Activated B cell treated with CpG ODN at 0.5 μM for 24 hours (primary cell): ENCODE measurements at regions of chr7 and their contacts with region 1.

Region 1: GRCh38 chr7:25125137-25125946 is at the start of gene CYCS:
- DNase-seq: peak; percentile 98
- ATAC-seq: peak; percentile 91
- H3K4me3 Mint-ChIP-seq: peak within 1 kb of the TSS; percentile 99
- H3K27ac Mint-ChIP-seq: peak within 1 kb of the TSS; percentile 99
- H3K4me1 Mint-ChIP-seq: peaks cover 31% of the 10 kb centered on the region
- H3K27me3 Mint-ChIP-seq: peaks cover 1% of the 10 kb centered on the region
- CTCF ChIP-seq: no peak
- total RNA-seq, gene CYCS: 73.0 and 85.0 TPM in 2 replicates

Region 2: DNA sequence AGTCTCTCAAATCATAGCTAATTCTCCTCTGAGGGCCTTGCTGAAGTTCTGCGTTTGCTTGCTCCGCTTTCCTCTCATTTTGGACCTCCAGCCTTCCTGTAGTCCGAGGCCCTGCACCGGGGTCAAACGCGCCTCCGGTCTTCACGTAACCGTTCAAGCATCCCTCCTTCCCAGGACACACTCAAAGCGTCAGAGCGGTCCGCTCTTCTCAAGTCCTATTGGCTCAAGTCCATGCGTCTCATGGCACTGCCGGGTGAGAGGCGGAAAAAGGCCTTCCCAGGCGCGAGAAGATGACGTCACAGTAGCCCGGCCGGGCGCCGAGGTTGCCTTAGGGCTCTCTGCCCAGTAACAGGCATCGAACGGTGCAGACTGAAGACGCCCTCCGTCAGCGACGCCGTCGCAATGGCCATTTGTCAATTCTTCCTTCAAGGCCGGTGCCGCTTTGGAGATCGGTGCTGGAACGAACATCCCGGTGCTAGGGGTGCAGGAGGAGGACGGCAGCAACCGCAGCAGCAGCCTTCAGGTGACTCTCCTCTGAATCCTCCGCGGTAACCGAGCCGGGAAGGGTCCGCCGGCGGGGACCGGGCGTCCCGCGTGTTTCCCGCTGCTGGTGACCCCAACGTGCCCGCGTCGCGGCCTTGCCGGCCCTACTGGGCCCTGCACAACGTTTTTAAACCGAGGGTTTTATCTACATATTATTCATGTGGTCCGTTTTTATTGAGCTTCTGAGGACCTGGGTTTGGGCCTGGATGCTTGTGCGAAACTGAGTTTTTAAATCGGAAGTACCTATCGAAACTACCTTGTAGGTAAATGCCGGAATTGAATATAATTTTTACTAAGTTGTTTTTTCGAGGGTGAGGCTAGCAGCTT is 1943.4 kb before region 1 on chr7 and contains the start of gene NUP42:
- CTCF ChIA-PET with region 1: no interaction called
- POLR2A ChIA-PET with region 1: no interaction called
- intact Hi-C with region 1: loop called (anchors 5 kb)
- DNase-seq: peak; percentile 90
- ATAC-seq: peak; percentile 90
- H3K4me3 Mint-ChIP-seq: peak within 1 kb of the TSS; percentile 94
- H3K27ac Mint-ChIP-seq: peak within 1 kb of the TSS; percentile 100
- H3K4me1 Mint-ChIP-seq: peaks cover 28% of the 10 kb centered on the region
- H3K27me3 Mint-ChIP-seq: no peaks in the 10 kb centered on the region
- CTCF ChIP-seq: no peak
- total RNA-seq, gene NUP42: 39.2 and 50.6 TPM in 2 replicates

Region 3: DNA sequence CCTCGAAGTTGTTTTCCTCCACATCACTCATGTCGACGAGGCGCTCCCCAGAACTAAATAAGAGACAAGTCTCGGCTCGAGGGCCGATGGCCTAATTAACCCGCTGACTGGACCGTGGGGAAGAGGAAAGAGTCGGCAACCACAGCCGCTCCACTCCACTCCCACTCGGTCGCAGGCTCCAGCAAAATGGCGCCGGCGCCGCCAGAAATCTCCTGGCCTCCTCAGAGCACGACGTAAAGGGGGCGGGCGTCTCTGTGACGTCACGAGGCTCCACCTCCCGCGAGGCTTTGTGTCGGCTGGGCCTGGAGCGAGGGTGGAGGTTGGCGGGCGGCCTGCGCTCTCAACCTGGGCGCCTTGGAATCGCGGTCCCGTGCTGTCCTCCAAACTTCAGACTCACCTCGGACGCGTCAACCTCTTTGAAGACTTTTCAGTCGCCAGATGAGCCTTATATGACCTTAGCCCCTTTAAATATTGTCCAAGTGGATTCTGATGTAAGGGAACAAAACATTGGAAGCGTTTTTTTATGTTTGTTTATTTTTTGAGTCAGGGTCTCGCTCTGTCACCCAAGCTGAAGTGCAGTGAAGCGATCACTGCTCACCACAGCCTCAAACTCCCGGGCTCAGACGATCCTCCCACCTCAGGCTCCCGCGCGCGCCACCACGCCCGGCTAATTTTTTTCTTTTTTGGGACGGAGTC is 1593.4 kb before region 1 on chr7 and contains the start of gene TRA2A:
- CTCF ChIA-PET with region 1: no interaction called
- POLR2A ChIA-PET with region 1: interaction called, 3 read pairs
- intact Hi-C with region 1: loop called (anchors 2 kb)
- DNase-seq: peak; percentile 97
- ATAC-seq: peak; percentile 89
- H3K4me3 Mint-ChIP-seq: peak within 1 kb of the TSS; percentile 99
- H3K27ac Mint-ChIP-seq: peak within 1 kb of the TSS; percentile 100
- H3K4me1 Mint-ChIP-seq: peaks cover 49% of the 10 kb centered on the region
- H3K27me3 Mint-ChIP-seq: no peaks in the 10 kb centered on the region
- CTCF ChIP-seq: no peak
- total RNA-seq, gene TRA2A: 123 and 144 TPM in 2 replicates

Region 4: DNA sequence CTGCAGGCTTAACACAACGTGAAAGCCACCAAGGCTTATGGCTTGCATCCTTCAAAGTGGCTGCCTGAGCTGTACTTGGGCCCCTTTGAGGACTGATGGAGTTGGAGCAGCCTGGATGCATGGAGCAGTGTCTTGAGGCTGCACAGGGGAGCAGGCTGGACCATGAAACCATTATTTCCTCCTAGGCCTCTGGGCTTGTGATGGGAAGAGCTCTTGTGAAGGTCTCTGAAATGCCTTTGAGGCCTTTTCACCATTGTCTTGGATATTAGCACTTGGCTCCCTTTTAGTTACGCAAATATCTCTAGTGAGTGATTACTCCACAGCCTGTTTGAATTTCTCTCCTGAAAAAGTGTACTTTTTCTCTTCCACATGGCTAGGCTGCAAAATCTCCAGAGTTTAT is 1042.5 kb before region 1 on chr7:
- CTCF ChIA-PET with region 1: no interaction called
- POLR2A ChIA-PET with region 1: no interaction called
- intact Hi-C with region 1: no loop called
- DNase-seq: no peak
- ATAC-seq: no peak
- H3K4me3 Mint-ChIP-seq: no peak overlapping the region
- H3K27ac Mint-ChIP-seq: no peak overlapping the region
- H3K4me1 Mint-ChIP-seq: no peaks in the 10 kb centered on the region
- H3K27me3 Mint-ChIP-seq: no peaks in the 10 kb centered on the region
- CTCF ChIP-seq: no peak

Region 5: DNA sequence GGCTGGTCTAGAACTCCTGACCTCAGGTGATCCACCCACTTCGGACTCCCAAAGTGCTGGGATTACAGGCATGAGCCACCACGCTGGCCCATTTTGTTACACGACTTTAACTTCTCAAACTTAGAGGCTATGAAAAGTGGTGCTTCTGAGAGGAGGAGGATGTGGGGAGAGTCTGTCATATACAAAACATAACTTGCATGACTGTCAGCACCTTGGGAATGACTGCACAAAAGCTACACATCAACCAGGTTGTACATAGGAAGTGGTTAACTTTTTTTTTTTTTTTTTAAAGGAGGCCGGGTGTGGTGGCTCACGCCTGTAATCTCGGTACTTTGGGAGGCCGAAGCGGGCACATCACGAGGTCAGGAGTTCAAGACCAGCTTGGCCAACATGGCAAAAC is 324.7 kb before region 1 on chr7:
- CTCF ChIA-PET with region 1: no interaction called
- POLR2A ChIA-PET with region 1: interaction called, 11 read pairs
- intact Hi-C with region 1: no loop called
- DNase-seq: no peak
- ATAC-seq: no peak
- H3K4me3 Mint-ChIP-seq: no peak overlapping the region
- H3K27ac Mint-ChIP-seq: no peak overlapping the region
- H3K4me1 Mint-ChIP-seq: no peaks in the 10 kb centered on the region
- H3K27me3 Mint-ChIP-seq: no peaks in the 10 kb centered on the region
- CTCF ChIP-seq: no peak

Region 6: DNA sequence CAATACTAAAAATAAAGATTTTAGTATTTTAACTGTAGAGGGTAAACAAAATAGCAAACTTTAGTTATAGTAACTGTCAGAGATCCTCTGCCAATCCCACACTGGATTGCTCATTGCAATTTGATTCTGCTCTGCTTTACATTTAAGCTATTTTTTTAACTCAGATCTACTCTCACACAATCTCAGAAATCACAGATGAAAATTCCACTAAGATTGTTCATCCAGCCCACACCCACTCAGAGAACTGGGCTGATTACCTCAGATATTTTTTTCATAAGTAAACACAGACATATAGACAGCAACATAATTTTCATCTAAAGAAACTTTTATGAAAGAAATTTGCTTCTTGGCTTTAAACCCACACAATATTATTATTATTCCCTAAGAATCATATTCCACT is 152.4 kb before region 1 on chr7:
- CTCF ChIA-PET with region 1: no interaction called
- POLR2A ChIA-PET with region 1: no interaction called
- intact Hi-C with region 1: no loop called
- DNase-seq: no peak
- ATAC-seq: no peak
- H3K4me3 Mint-ChIP-seq: no peak overlapping the region
- H3K27ac Mint-ChIP-seq: no peak overlapping the region
- H3K4me1 Mint-ChIP-seq: peaks cover 28% of the 10 kb centered on the region
- H3K27me3 Mint-ChIP-seq: no peaks in the 10 kb centered on the region
- CTCF ChIP-seq: no peak

Region 7: DNA sequence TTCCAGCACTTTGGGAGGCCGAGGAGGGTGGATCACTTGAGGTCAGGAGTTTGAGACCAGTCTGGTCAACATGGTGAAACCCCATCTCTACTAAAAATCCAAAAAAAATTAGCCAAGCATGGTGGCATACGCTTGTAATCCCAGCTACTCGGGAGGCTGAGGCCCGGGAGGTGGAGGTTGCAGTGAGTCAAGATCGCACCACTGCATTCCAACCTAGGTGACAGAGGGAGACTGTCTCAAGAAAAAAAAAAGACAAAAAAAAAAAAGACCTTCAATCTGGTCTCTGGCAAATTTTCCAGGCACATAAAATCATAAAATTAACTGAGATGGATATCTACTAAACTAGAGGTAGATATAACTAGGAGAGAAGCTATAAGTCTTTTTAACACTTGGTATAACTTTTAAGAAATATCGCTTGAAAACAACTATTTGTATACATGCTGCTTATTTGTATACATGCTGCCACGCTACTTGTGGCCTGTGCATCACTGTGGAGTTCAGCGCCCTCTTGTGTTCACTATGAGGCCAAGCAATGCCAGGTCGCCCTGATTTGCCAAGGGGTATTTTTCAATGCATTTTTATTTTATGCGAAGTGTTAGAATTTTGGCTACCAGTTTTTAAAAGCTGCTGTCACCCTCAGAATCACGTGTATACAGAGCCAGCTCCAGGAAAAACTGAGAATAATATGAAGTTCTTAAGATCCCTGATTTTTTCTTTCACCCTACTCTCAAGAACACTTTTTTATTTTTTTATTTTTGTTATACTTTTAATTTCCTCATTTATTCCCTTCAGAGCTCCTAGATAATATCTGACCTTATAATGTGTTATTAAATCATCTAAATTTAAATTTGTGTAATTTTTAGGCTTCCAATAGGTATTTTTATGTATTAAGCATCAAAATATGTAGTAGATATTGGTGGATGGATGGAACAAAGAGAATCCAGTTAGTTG is 27.0 kb before region 1 on chr7:
- CTCF ChIA-PET with region 1: interaction called, 4 read pairs
- POLR2A ChIA-PET with region 1: interaction called, 5 read pairs
- intact Hi-C with region 1: loop called (anchors 1 kb)
- DNase-seq: no peak
- ATAC-seq: peak; percentile 87
- H3K4me3 Mint-ChIP-seq: no peak overlapping the region
- H3K27ac Mint-ChIP-seq: no peak overlapping the region
- H3K4me1 Mint-ChIP-seq: peaks cover 5% of the 10 kb centered on the region
- H3K27me3 Mint-ChIP-seq: peaks cover 3% of the 10 kb centered on the region
- CTCF ChIP-seq: peak; percentile 31

Region 8: DNA sequence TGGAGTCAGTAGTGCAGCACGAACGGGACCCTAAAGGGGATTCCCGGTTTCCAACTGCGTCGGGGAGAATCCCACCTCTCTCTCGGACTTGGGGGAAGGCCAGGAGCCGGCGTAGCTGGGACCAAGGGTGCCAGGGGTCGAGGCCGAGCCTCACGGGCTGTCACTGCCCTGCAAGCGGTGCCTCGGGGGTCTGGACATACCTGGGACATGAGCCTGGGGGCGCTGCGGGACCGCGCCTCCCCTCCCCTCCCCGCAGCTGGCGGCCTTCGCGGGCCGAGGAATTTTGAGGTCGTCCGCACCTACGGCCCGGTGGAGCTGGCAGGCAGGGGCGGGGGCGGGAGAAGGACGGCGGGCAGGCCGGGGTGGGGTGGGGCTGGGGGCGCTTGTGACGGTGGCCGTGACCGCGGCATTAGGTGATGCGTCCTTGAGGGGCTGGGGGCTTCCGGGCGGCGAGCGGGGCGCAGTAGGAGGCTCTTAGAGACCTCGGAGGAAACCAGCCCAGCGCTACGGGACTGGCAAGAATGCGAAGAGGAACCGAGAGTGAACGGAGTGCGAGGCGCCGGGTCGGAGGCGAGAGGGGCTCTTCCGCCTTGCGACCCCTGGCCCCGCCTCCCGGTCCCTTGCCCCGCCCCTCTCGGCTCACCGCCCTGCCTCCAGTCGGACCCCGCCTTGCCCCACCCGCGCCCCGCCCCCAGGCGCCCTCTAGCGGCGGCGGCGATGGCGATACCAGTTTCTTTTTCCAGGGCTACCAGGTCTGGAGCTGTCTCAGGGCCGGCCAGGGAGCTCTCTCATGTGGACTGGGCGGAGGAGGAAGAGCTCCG is 54.6 kb after region 1 on chr7:
- CTCF ChIA-PET with region 1: interaction called, 5 read pairs
- POLR2A ChIA-PET with region 1: interaction called, 41 read pairs
- intact Hi-C with region 1: loop called (anchors 1 kb)
- DNase-seq: peak; percentile 100
- ATAC-seq: peak; percentile 97
- H3K4me3 Mint-ChIP-seq: peak overlapping the region; percentile 87
- H3K27ac Mint-ChIP-seq: peak overlapping the region; percentile 95
- H3K4me1 Mint-ChIP-seq: peaks cover 15% of the 10 kb centered on the region
- H3K27me3 Mint-ChIP-seq: no peaks in the 10 kb centered on the region
- CTCF ChIP-seq: peak; percentile 46